Ovary (tissue), 10 donors: ENCODE measurements at regions of chr15 and their contacts with region 1.

Region 1: DNA sequence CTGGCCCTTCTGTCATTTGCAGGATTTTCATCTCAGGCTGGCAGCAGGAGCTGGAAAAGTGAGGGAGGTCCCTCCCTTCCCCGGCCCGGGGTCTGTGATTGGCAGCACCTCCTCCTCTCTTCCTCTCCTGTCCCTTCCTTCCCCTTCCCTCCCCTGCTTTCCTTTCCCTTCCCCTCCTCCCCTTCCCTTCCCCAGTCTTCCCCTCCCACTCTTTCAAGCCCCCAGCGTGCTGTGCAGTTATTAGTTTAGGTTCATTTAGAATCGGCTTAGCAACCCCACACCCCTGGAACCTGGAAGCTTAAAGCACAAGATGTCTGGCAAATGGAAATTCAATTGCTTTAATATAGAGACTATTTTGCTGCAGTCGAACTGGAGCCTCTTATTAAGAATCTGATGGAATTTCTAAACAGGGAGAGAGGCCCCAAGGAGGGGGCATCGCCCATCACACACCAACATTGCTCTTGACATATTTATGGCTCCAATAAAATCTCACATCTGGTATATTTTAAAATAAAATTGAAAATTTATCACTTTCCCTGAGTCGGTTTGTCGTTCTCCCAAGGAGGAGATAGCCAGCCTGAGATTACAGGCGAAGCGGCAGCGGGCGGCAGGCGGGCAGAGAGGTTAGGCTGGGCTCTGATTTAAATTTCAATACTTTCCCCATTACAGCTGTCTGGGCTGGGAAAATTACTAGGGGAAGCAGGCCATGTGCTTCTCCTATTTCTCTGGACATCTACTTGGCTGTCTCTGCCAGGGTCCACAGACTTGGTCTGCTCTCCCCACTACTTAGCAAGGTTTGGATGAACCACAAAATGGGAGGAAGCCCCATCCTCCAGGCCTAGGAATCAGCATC is 98.9 kb downstream of the LINGO1 start:
- DNase-seq: peak in 2 of 5 donors; percentile 10 to 14
- H3K4me3 ChIP-seq: no peak overlapping the region
- H3K27ac ChIP-seq: no peak overlapping the region
- H3K4me1 ChIP-seq: peaks cover 5% of the 10 kb centered on the region
- H3K27me3 ChIP-seq: no peaks in the 10 kb centered on the region
- CTCF ChIP-seq: no peak
- EP300 ChIP-seq: no peak
- POLR2A ChIP-seq: no peak

Region 2: DNA sequence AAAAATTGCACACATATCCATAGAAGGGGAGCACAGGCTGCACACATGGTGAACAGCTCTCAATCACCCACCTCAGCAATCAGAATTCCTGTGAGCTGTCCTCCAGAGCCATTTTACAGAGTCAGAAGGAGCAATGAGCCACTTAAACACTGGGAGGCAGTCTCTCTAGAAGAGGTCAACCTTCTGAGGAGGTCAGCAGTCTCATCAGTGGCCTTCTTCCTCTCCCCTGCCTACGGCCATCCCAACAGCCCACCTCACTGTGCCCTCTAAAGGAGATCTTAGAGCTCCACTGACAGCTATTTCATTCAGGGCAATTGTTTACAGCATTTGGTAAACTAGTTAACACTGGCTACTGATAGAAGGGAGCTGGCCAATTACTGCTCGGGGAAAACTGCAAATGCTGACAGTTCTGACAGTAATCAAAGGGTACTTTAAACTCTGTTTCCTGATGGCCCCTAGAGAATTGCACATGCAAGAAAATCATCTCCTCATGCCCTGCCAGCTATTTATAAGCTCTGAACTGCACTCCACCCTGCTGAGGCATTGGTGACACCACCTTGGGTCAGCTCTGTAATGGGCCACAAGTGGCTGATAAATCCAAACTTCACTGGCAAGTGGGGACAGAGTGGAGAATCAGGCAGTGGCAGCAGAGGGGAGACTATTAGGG is 420.8 kb before region 1 on chr15:
- intact Hi-C with region 1: loop called in 1 of 4 experiments (anchors 1 kb)
- DNase-seq: no peak
- H3K4me3 ChIP-seq: no peak overlapping the region
- H3K27ac ChIP-seq: no peak overlapping the region
- H3K4me1 ChIP-seq: no peaks in the 10 kb centered on the region
- H3K27me3 ChIP-seq: no peaks in the 10 kb centered on the region
- CTCF ChIP-seq: no peak
- EP300 ChIP-seq: no peak
- POLR2A ChIP-seq: no peak